ENCODE measurements at regions of chr17 and their contacts with region 1.

Region 1: DNA sequence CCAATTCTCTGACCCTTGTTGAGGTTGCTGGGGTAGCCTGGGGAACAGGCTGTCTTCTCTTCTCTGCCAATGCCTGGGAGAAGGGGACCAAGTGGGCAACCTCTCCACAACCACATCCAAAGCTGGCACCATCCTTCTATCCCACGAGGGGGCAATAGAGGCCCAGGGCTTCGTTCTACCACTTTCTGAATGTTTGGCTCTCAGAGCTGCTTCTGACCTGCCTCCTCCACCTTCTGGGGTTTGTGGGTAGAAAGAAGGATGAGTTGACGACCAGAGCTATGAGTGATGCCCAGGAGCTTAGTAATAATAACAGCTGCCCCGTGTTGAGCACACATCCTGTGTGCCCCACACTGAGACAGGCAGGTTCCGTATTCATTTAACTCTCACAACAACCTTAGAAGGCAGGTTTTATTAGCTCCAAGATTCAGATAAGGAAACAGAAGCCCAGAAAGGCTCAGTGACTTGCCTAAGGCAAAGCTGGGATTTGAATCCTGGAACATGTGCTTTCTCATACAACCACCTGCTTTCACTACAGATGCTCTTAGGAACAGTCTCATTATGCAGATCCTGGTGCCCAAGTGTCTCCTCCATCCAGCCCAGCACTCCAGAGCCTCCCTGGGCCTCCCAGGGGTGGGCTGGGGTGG is 11.1 kb downstream of the TSPOAP1 start:
- DNase-seq: peak; percentile 77 to 92
- ATAC-seq: peak; percentile 80 to 94
- H3K4me3 ChIP-seq: no peak overlapping the region
- H3K27ac ChIP-seq: peak overlapping the region; percentile 5 to 24; a peak in 1 of 6 replicates
- H3K4me1 ChIP-seq: peaks cover 6% of the 10 kb centered on the region; the same call in 2 of the 3 replicates
- CTCF ChIP-seq: peak; percentile 96
- EP300 ChIP-seq: no peak
- POLR2A ChIP-seq: no peak
- RAD21 ChIP-seq: peak; percentile 98

Region 2: DNA sequence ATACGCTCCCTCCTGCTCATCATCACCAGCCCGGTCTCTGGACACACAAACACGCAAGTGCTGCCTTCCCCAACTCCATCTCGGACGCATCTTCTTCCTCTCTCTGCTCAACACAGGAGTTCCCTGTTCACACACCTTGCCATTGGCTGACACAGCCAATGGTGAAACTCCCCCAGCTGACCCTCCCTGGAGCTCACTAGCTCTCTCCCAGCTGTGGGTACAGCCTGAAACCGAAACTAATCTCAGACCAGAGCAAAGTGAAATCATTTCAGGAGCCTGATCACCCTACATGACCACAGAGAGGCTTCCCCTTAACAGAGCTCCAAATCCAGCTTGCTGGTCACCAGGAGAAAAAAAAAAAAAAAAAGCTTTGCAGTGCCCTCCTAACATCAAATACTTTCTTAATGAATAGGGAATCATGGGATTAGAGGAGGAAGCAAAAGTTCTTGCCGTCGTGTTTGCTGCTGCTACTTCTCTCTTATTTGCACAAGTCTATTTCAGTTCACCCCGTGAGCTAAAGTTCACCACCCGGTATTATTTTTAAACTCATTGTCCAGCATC is 370.7 kb before region 1 on chr17:
- CTCF ChIA-PET with region 1: no interaction called
- POLR2A ChIA-PET with region 1: no interaction called
- DNase-seq: peak; percentile 66 to 83
- ATAC-seq: peak; percentile 20 to 22; a peak in 4 of 6 replicates
- H3K4me3 ChIP-seq: peak overlapping the region; percentile 34
- H3K27ac ChIP-seq: peak overlapping the region; percentile 93 to 100
- H3K4me1 ChIP-seq: peaks cover 91% of the 10 kb centered on the region
- CTCF ChIP-seq: no peak
- EP300 ChIP-seq: no peak
- POLR2A ChIP-seq: no peak
- RAD21 ChIP-seq: no peak; a peak in 1 of 5 replicates

Region 3: DNA sequence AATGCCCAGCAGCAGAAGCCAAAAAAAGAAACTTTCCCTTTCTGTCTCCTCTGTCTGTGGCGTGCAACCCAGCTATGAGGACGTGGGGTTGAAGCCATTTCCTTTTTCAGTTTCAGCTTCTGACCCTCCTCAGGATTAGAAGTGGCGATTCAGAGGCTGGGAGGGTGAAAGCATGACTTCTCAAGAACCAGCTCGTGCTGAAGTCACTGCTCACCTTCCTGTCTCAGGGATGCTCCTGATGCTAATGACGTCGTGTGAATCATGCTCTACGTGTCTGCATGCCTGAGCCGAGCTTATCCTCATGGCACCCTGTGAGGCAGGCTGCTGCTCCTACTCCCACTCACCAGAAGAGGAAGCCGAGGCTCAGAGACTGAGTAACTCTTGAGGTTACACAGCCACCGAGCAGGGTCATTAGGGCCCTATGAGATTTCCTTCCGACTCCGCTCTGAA is 84.8 kb before region 1 on chr17:
- CTCF ChIA-PET with region 1: interaction called, 10 read pairs
- POLR2A ChIA-PET with region 1: no interaction called
- DNase-seq: peak in 1 of 2 experiments; percentile 44
- ATAC-seq: peak; percentile 65 to 66
- H3K4me3 ChIP-seq: no peak overlapping the region
- H3K27ac ChIP-seq: no peak overlapping the region
- H3K4me1 ChIP-seq: no peaks in the 10 kb centered on the region
- CTCF ChIP-seq: no peak
- EP300 ChIP-seq: no peak
- POLR2A ChIP-seq: no peak
- RAD21 ChIP-seq: no peak

Region 4: GRCh38 chr17:58303971-58304725 is 13.4 kb before region 1 on chr17:
- CTCF ChIA-PET with region 1: interaction called, 165 read pairs
- POLR2A ChIA-PET with region 1: no interaction called
- DNase-seq: peak; percentile 63 to 93
- ATAC-seq: peak; percentile 70 to 90; a peak in 5 of 6 replicates
- H3K4me3 ChIP-seq: no peak overlapping the region
- H3K27ac ChIP-seq: no peak overlapping the region
- H3K4me1 ChIP-seq: no peaks in the 10 kb centered on the region
- CTCF ChIP-seq: peak; percentile 59
- EP300 ChIP-seq: no peak
- POLR2A ChIP-seq: no peak
- RAD21 ChIP-seq: peak; percentile 30 to 55; a peak in 3 of 5 replicates

Region 5: DNA sequence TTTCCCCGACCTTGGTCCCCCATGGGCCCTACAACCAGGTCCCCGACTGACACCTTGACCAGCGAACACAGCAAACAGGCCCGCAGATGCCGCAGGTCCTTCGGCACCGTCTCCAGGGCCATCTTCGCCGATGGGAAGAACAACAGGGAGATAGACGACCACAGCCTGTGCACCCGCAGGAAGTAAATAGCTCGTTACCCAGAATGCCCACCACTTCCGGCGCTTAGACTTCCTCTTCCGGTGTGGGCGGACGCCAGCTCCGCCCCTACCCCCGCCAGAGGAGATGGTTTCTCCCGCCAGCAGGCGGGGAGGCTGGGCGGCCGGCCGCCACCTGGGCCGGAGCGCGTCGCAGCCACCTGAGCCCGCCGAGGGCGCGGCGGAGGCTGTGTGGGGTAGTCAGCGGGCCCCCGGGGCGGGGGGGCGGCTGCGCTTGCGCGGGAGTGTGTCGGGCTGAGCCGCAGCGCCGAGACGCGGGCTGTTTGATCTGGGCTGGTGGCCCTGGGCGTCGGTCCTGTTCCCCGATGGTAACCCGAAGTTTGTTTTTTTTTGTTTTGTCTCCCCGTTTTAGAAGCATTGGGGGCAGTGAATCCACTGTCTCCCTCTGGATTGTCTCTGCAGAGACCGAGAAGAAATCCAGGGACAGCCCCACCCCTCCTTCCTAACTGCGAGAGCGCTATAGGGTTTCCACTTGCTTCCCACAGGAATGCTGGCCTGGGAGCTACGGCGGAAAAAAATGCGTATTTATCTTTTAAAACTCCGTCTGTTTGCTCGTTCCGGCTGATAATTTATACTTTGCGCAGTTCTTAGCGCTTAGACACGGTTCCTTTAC is 34.7 kb after region 1 on chr17 and contains the start of gene SUPT4H1:
- CTCF ChIA-PET with region 1: interaction called, 28 read pairs
- POLR2A ChIA-PET with region 1: interaction called, 8 read pairs
- DNase-seq: peak; percentile 95 to 99
- ATAC-seq: peak; percentile 97 to 99
- H3K4me3 ChIP-seq: peak within 1 kb of the TSS; percentile 83
- H3K27ac ChIP-seq: peak within 1 kb of the TSS; percentile 88 to 92
- H3K4me1 ChIP-seq: peaks cover 9% of the 10 kb centered on the region; the same call in 2 of the 3 replicates
- CTCF ChIP-seq: peak; percentile 4; the same call in 1 of the 3 replicates
- EP300 ChIP-seq: no peak; a peak in 1 of 5 replicates
- POLR2A ChIP-seq: peak; percentile 92
- RAD21 ChIP-seq: peak in 1 of 2 experiments; percentile 68; a peak in 3 of 5 replicates
- polyA plus RNA-seq, gene SUPT4H1: 241 and 260 TPM in 2 replicates

Region 6: DNA sequence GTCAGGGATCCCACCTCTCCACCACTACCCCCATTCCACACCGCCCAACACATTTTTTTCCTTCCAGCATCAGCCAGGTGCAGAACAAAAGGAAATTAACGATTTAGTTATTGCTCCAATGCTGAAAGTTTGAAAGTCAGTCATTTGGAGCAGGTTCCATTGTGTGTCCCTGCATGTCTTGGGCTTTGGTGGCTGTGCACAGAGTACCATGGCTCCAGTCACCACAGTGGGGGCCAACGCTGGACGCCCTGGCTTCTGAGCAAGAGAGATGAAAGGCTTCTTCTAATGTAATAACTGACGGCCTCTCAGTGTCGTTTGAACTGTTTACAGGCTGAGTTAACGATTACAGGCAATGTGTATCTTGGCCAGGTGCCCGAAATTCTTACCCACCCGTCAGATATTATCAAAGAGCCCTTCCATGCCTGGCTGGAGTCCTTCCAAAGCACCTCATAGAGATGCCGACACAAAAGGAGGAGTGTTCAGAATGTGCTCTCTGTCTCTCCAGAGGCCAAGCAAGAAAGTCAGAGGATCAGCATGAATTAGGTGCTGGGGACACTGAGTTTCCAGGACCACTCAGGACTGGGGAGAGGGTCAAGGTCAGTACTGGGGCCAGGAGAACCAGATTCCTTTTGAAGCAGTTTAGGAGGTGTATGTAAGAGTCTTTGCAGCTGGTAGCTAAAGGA is 73.9 kb after region 1 on chr17:
- CTCF ChIA-PET with region 1: interaction called, 13 read pairs
- POLR2A ChIA-PET with region 1: no interaction called
- DNase-seq: peak; percentile 67 to 96
- ATAC-seq: peak; percentile 89 to 90
- H3K4me3 ChIP-seq: peak overlapping the region; percentile 4; the same call in 1 of the 3 replicates
- H3K27ac ChIP-seq: peak overlapping the region; percentile 77 to 84
- H3K4me1 ChIP-seq: peaks cover 72% of the 10 kb centered on the region
- CTCF ChIP-seq: no peak
- EP300 ChIP-seq: peak; percentile 90 to 95; a peak in 4 of 5 replicates
- POLR2A ChIP-seq: no peak
- RAD21 ChIP-seq: peak; percentile 24 to 66; a peak in 3 of 5 replicates

Region 7: DNA sequence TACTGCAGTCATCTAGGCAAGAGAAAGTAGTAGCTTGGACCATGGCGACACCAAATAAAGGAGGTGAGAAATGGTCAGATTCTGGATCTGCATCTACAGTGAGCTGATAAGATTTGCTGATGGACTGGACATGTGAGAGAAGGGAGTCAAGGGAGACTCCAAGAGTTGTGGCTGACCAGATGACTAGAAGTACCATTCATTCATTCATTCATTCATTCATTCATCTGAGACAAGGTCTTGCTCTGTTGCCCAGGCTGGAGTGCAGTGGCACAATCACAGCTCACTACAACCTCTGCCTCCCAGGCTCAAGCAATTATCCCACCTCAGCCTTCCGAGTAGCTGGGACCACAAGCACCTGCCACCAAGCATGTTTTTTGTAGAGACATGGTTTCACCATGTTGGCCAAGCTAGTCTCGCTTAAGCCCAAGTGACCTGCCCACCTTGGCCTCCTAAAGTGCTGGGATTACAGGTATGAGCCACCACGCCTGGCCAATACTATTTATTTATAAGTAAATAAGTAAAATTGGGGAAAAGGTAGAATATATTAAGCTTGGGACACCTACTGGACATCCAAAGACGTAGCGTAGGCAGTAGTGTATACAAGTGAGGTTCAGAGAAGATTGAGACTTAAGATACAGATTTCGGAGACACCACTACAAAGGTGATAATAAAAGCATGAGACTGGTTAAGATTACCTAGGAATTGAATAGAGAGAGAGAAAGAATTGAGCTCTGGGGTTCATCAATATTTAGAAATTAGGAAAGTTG is 115.4 kb after region 1 on chr17:
- CTCF ChIA-PET with region 1: interaction called, 80 read pairs
- POLR2A ChIA-PET with region 1: no interaction called
- DNase-seq: no peak
- ATAC-seq: no peak
- H3K4me3 ChIP-seq: no peak overlapping the region
- H3K27ac ChIP-seq: no peak overlapping the region
- H3K4me1 ChIP-seq: no peaks in the 10 kb centered on the region
- CTCF ChIP-seq: no peak
- EP300 ChIP-seq: no peak
- POLR2A ChIP-seq: no peak
- RAD21 ChIP-seq: no peak